ENCODE measurements at regions of chr6 and their contacts with region 1.

Region 1: GRCh38 chr6:106114492-106115265 is 28.5 kb downstream of the PRDM1 start:
- DNase-seq: peak; percentile 64
- ATAC-seq: no peak
- H3K4me3 Mint-ChIP-seq: peak overlapping the region; percentile 48
- H3K27ac Mint-ChIP-seq: peak overlapping the region; percentile 83
- H3K4me1 Mint-ChIP-seq: peaks cover 87% of the 10 kb centered on the region
- H3K27me3 Mint-ChIP-seq: peaks cover 2% of the 10 kb centered on the region

Region 2: DNA sequence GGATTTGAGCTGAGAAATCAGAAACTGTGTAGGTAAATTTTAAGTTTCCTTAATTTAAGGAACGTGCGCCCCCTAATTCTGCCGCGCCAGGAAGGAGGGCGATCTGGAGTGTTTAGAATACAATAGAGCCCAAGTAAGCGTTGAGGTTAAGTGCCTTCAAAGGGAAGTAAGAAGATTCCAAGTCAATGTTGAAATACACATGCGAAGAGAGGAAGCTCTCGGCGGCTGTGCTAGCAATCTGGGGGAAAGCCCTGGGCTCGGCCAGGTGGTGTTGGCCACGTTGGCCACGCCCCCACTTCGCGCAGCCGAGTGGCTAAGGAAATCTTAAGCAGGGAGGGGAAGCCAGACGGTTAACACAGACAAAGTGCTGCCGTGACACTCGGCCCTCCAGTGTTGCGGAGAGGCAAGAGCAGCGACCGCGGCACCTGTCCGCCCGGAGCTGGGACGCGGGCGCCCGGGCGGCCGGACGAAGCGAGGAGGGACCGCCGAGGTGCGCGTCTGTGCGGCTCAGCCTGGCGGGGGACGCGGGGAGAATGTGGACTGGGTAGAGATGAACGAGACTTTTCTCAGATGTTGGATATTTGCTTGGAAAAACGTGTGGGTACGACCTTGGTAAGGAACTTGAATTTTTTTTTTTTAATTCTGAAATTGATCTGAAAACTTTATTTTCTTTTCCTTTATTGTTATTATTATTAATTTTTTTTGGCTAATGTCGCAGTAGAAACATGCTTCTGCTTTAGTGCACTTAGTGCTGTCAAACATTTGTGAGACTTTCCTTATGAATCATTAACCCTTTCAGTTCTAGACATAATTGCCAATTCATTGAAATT is 28.5 kb before region 1 on chr6 and contains the start of gene PRDM1:
- CTCF ChIA-PET with region 1: interaction called, 18 read pairs
- POLR2A ChIA-PET with region 1: no interaction called
- DNase-seq: peak; percentile 87
- ATAC-seq: peak; percentile 96
- H3K4me3 Mint-ChIP-seq: peak within 1 kb of the TSS; percentile 84
- H3K27ac Mint-ChIP-seq: peak within 1 kb of the TSS; percentile 70
- H3K4me1 Mint-ChIP-seq: peaks cover 70% of the 10 kb centered on the region
- H3K27me3 Mint-ChIP-seq: peaks cover 30% of the 10 kb centered on the region
- total RNA-seq, gene PRDM1: 14.4 to 14.7 TPM

Region 3: DNA sequence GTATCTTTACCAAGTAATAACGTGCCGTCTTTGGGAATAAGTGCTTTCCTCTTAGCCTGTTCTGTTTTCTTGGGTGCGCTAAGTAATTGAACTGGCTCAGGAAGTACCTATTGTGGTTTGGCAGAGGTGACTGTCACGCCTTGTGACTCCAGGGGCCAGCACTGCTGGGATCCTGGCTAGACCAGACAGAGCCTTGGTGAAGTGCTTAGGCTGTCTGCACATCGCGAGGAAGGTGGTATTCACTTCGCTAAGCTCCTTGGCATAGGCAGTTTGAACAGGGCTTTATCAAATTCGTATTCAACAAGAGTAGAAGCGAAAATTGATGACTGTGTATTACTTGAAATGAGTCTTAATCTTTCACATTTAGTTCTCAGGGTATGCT is 11.0 kb before region 1 on chr6:
- CTCF ChIA-PET with region 1: interaction called, 8 read pairs
- POLR2A ChIA-PET with region 1: interaction called, 23 read pairs
- DNase-seq: peak; percentile 56
- ATAC-seq: peak; percentile 74
- H3K4me3 Mint-ChIP-seq: peak overlapping the region; percentile 87
- H3K27ac Mint-ChIP-seq: peak overlapping the region; percentile 74
- H3K4me1 Mint-ChIP-seq: peaks cover 88% of the 10 kb centered on the region
- H3K27me3 Mint-ChIP-seq: no peaks in the 10 kb centered on the region

Region 4: DNA sequence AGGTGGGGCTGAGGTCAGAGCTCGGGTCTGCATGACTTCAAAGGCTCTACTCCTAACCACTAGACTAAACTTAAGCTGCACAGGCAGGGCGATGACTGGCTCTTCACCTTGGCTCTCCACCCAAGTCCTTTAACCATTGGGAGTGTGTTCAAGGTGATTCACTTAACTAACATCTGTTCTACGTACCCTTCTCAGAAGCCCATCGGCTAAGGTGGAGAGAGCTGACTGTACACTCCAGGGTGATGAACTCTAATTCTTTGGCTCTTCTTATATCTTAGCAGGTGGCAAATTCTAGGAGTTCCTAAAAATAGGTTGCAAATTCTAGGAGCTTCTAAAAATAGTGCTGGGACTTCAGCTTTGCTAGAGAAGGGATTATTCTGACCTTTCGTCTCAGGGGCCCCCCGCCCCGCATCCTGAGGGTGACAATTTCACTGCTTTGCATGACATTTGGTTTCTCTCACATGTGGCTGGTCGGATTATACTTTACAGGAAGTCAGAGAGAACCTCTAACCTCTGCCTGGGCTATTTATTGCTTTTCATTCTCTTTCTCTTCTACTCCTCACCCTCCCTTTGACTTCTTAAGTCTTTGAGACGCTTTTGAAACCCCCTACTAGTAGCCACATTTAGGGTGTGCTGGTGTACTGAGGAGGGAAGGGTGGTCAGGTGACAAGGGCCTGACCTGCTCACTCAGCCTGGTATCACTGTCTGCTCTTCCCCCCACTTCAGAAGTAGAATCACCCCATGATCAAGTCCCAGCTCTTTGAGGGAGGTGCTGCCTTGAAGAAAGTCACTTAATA is 27.0 kb after region 1 on chr6:
- CTCF ChIA-PET with region 1: interaction called, 13 read pairs
- POLR2A ChIA-PET with region 1: interaction called, 30 read pairs
- DNase-seq: peak; percentile 85
- ATAC-seq: peak; percentile 87
- H3K4me3 Mint-ChIP-seq: peak overlapping the region; percentile 67
- H3K27ac Mint-ChIP-seq: peak overlapping the region; percentile 97
- H3K4me1 Mint-ChIP-seq: peaks cover 73% of the 10 kb centered on the region
- H3K27me3 Mint-ChIP-seq: no peaks in the 10 kb centered on the region

Region 5: GRCh38 chr6:106163446-106163965 is 48.8 kb after region 1 on chr6:
- CTCF ChIA-PET with region 1: interaction called, 6 read pairs
- POLR2A ChIA-PET with region 1: interaction called, 13 read pairs
- DNase-seq: peak; percentile 71
- ATAC-seq: peak; percentile 84
- H3K4me3 Mint-ChIP-seq: peak overlapping the region; percentile 34
- H3K27ac Mint-ChIP-seq: peak overlapping the region; percentile 93
- H3K4me1 Mint-ChIP-seq: peaks cover 65% of the 10 kb centered on the region
- H3K27me3 Mint-ChIP-seq: no peaks in the 10 kb centered on the region

Measured in activated CD8-positive, alpha-beta T cell treated with anti-CD3 and anti-CD28 coated beads, Interleukin-2, amount 10 ng/mL, durations not matched to agents 7 days and 5 days (primary cell).